ENCODE measurements at regions of chr18 and their contacts with region 1.

Region 1: DNA sequence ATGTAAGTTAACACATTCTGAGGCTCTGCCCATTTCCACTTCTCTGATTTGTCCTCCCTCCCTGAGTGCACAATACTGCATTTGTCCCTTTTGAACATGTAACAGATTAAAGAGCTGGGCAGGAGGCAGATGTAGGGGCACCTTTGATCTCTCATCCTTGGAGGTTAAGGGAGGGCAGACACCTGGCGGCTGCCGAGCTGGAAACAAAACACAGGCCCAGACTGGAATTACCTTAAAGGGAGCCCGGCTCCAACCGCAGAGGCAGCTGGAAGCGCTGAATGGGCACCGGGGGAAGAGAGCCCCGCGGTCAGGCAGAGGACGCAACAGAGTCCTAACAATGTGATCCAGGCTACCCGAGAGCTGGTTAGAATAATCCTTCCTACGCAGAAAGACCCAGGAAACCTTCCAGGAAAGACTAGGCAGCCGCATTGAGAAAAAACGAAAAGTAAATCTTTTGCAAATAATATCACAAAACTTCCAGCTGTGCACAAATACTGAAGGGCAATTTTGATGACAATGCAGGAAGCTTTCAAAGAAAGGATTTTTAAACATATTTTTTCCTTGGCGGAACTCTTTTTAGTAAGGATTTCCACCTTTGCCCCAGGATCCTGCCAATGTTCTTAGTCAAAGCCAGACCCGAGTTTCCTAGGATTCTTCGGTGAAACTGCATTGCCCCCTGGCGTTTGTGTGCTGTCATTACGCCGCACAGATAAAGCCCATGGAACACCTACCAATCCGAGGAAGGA is 216.0 kb downstream of the TGIF1 start:
- DNase-seq: peak; percentile 79
- ATAC-seq: peak; percentile 83
- H3K4me3 Mint-ChIP-seq: peak overlapping the region; percentile 37
- H3K27ac Mint-ChIP-seq: no peak overlapping the region
- H3K4me1 Mint-ChIP-seq: peaks cover 27% of the 10 kb centered on the region
- H3K27me3 Mint-ChIP-seq: peaks cover 8% of the 10 kb centered on the region

Region 2: GRCh38 chr18:3281456-3282400 is 384.2 kb before region 1 on chr18:
- CTCF ChIA-PET with region 1: interaction called, 214 read pairs
- POLR2A ChIA-PET with region 1: interaction called, 5 read pairs
- DNase-seq: no peak
- ATAC-seq: peak; percentile 82
- H3K4me3 Mint-ChIP-seq: no peak overlapping the region
- H3K27ac Mint-ChIP-seq: no peak overlapping the region
- H3K4me1 Mint-ChIP-seq: no peaks in the 10 kb centered on the region
- H3K27me3 Mint-ChIP-seq: peaks cover 5% of the 10 kb centered on the region

Region 3: GRCh38 chr18:3441290-3441689 is 224.7 kb before region 1 on chr18:
- CTCF ChIA-PET with region 1: interaction called, 18 read pairs
- POLR2A ChIA-PET with region 1: no interaction called
- DNase-seq: no peak
- ATAC-seq: no peak
- H3K4me3 Mint-ChIP-seq: no peak overlapping the region
- H3K27ac Mint-ChIP-seq: no peak overlapping the region
- H3K4me1 Mint-ChIP-seq: peaks cover under 1% of the 10 kb centered on the region
- H3K27me3 Mint-ChIP-seq: peaks cover 12% of the 10 kb centered on the region

Region 4: DNA sequence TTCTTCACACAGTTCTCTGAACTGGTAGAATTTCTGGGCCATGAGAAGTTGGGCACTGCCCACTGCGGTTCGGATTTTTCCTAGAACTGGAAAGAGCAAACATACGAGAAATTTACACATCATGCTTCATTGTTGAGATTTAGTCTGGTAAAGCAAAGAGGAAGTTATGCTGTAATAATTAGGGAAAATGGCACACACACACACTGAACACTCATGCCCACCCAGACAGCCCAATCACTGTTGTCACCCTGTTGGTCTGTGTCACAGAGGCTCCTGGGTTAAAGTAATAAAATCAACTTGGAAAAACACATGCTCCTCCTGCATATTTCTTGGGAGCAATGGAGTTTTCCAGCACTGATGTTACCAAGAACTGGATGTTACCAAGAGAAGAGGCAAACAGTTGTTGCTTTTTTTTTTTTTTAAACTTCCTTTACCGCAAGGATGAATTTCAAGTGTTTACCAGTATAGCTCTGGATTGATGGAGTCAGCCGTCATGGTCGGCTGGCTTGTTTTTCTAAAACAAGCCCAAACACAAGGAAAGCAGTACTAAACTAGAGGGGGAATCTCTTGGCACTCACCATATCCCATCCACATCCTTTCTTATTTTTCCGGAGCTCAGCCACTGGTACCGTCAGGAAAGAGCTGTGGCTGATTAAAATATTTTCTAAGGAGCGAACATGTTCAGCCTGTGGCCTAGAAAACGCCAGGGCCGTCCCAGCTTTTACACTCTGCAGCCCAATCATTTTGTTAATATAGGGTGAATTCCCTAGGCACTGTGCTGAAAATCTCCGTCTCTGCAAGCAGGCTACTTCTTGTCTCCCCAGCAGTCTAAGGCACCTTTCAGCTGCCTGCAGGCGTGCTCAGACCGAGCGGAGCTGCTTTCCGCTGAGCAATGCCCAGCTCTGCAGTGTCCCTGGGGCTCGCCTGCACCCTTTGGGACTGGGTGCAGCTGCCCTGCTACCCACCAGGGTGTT is 157.1 kb before region 1 on chr18:
- CTCF ChIA-PET with region 1: no interaction called
- POLR2A ChIA-PET with region 1: no interaction called
- DNase-seq: no peak
- ATAC-seq: no peak
- H3K4me3 Mint-ChIP-seq: no peak overlapping the region
- H3K27ac Mint-ChIP-seq: no peak overlapping the region
- H3K4me1 Mint-ChIP-seq: peaks cover 10% of the 10 kb centered on the region
- H3K27me3 Mint-ChIP-seq: peaks cover 2% of the 10 kb centered on the region

Region 5: DNA sequence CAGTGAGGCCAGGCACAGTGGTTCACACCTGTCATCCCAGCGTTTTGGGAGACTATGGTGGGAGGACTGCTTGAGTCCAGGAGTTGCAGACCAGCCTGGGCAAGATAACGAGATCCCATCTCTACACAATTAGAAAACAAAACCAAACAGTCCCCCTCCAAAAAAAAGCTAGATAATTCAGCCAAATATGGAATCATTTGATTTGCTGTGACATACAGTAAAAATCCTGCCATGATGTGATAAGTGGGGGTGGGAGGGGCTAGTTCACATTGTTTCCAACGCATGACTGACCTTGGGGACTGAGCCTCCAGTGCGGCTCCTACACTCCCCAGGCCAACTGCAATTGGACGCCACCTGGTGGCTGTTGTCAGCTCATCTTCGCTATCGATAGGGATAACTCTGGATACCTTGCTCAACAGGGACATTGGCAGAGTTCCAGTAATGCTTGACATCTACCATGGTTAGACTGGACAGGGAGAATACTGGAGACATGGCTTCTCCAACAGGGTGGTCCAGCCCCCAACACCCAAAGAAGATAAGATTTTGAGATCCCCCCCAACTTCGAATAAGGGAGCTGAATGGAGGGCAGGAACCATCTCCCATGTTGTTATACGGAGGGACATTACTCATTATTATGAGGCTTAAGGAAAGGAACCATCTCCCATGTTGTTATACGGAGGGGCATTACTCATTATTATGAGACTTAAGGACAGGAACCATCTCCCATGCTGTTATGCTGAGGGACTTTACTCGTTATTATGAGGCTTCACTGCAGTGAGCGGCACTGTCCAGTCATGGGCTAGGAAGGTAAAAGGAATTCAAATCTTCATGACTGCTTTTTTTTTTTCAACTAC is 80.1 kb before region 1 on chr18:
- CTCF ChIA-PET with region 1: interaction called, 59 read pairs
- POLR2A ChIA-PET with region 1: interaction called, 3 read pairs
- DNase-seq: peak; percentile 80
- ATAC-seq: peak; percentile 95
- H3K4me3 Mint-ChIP-seq: no peak overlapping the region
- H3K27ac Mint-ChIP-seq: no peak overlapping the region
- H3K4me1 Mint-ChIP-seq: peaks cover 28% of the 10 kb centered on the region
- H3K27me3 Mint-ChIP-seq: no peaks in the 10 kb centered on the region

Region 6: DNA sequence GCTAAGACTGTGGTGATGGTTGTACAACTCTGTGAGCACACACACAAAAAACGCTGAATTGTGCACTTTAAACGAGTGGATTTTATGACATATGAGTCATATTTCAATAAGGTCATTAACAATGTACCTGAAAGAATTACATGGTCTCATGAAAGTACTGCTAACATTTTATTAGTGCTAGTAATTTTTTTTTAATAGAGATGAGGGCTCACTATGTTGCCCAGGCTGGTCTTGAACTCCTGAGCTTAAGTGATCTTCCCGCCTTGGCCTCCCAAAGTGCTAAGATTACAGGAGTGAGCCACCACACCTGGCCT is 39.1 kb before region 1 on chr18:
- CTCF ChIA-PET with region 1: interaction called, 17 read pairs
- POLR2A ChIA-PET with region 1: interaction called, 3 read pairs
- DNase-seq: no peak
- ATAC-seq: no peak
- H3K4me3 Mint-ChIP-seq: no peak overlapping the region
- H3K27ac Mint-ChIP-seq: no peak overlapping the region
- H3K4me1 Mint-ChIP-seq: peaks cover 35% of the 10 kb centered on the region
- H3K27me3 Mint-ChIP-seq: no peaks in the 10 kb centered on the region

Region 7: DNA sequence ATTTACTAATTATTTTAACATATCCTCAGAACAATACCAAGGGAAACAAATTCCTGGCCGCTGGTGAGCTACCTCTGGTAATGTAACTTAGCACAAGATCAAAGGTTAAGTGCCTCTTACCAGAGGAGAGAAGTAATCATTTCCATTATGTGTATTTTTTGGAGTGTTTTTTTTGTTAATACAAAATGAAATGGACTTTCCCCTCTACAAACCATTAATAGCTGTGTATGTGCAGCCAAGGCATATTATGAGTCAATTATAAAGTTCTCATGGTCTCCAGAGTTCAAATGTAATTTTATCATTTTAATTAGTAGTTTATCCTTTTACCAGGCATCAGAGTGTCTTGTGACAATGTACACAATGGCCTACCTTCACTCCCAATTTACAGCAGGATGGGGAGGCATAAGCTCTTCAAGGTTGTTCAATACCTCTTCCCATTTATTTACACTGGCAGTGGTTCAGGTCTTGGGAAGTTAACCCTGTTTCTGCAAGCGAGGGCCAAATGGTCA is 26.2 kb after region 1 on chr18:
- CTCF ChIA-PET with region 1: interaction called, 10 read pairs
- POLR2A ChIA-PET with region 1: no interaction called
- DNase-seq: no peak
- ATAC-seq: no peak
- H3K4me3 Mint-ChIP-seq: no peak overlapping the region
- H3K27ac Mint-ChIP-seq: no peak overlapping the region
- H3K4me1 Mint-ChIP-seq: no peaks in the 10 kb centered on the region
- H3K27me3 Mint-ChIP-seq: peaks cover 4% of the 10 kb centered on the region

Region 8: GRCh38 chr18:3722320-3723000 is 56.5 kb after region 1 on chr18:
- CTCF ChIA-PET with region 1: no interaction called
- POLR2A ChIA-PET with region 1: no interaction called
- DNase-seq: no peak
- ATAC-seq: no peak
- H3K4me3 Mint-ChIP-seq: no peak overlapping the region
- H3K27ac Mint-ChIP-seq: no peak overlapping the region
- H3K4me1 Mint-ChIP-seq: no peaks in the 10 kb centered on the region
- H3K27me3 Mint-ChIP-seq: peaks cover 9% of the 10 kb centered on the region